ENCODE measurements at regions of chr9 and their contacts with region 1.

Region 1: DNA sequence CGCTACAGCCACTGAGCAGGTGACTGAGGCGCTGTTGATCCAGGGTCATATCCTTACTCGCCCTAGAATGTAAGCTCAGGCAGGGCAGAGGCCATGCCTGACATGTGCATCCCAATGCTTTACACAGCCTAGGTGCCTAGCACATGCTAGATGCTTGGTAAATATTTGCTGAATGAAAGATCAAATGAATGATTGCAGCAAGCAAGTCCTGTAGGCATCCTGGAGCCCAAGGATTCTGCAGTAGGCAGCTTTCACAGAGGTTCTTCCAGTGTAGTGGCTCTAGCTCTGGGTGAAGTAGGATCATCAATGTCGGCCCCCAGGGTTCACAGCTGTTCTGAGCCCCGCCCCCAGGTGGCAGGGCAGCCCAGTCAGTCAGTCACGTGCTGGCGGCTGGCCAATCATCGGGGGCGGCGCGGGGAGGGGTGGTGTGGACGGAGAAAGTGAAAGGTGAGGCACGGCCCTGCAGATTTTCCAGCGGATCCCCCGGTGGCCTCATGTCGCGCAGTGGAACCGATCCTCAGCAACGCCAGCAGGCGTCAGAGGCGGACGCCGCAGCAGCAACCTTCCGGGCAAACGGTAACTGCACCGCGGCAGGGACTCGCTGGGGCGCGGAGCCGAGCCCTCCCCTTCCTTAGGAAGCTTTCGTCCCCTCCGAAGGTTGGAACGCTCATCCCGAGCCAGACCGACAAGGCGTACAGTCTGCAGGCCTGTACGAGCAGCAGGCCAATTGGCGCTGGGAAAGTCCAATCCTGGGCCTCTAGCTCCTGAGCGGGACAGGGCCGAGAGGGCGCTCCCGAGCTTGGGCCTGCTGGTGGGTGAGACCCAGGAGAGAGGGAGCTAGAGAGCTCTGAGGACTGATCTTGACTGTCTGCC is at the start of gene GALT:
- DNase-seq: peak; percentile 92 to 96 (median 94)
- H3K4me3 ChIP-seq: peak within 1 kb of the TSS; percentile 83 to 87
- H3K4me3 Mint-ChIP-seq: peak within 1 kb of the TSS; percentile 93 to 97 (median 95)
- H3K27ac ChIP-seq: peak within 1 kb of the TSS; percentile 84
- H3K27ac Mint-ChIP-seq: peak within 1 kb of the TSS; percentile 89 to 96 (median 93)
- H3K4me1 ChIP-seq: peaks cover 28% of the 10 kb centered on the region
- H3K4me1 Mint-ChIP-seq: peaks cover 23 to 49% (median 31%) of the 10 kb centered on the region in 4 donors
- H3K27me3 ChIP-seq: no peaks in the 10 kb centered on the region
- H3K27me3 Mint-ChIP-seq: no peaks in the 10 kb centered on the region
- total RNA-seq, gene GALT: 251 to 261 TPM

Region 2: GRCh38 chr9:34611829-34612630 is 34.4 kb before region 1 on chr9 and contains the start of gene RPP25L:
- CTCF ChIA-PET with region 1: interaction called, 7 read pairs
- POLR2A ChIA-PET with region 1: interaction called, 22 read pairs
- intact Hi-C with region 1: loop called (anchors 5 kb)
- DNase-seq: peak; percentile 83 to 89 (median 86)
- H3K4me3 ChIP-seq: peak within 1 kb of the TSS; percentile 81 to 88
- H3K4me3 Mint-ChIP-seq: peak within 1 kb of the TSS; percentile 87 to 99 (median 92)
- H3K27ac ChIP-seq: peak within 1 kb of the TSS; percentile 71
- H3K27ac Mint-ChIP-seq: peak within 1 kb of the TSS; percentile 83 to 97 (median 96)
- H3K4me1 ChIP-seq: peaks cover 19% of the 10 kb centered on the region
- H3K4me1 Mint-ChIP-seq: peaks cover 7 to 35% (median 25%) of the 10 kb centered on the region in 4 donors
- H3K27me3 ChIP-seq: no peaks in the 10 kb centered on the region
- H3K27me3 Mint-ChIP-seq: no peaks in the 10 kb centered on the region
- total RNA-seq, gene RPP25L: 28.5 to 28.9 TPM

Region 3: GRCh38 chr9:34620061-34620994 is 26.1 kb before region 1 on chr9 and contains the start of gene DCTN3:
- CTCF ChIA-PET with region 1: interaction called, 10 read pairs
- POLR2A ChIA-PET with region 1: interaction called, 18 read pairs
- intact Hi-C with region 1: no loop called
- DNase-seq: peak; percentile 89 to 97 (median 93)
- H3K4me3 ChIP-seq: peak within 1 kb of the TSS; percentile 71 to 90
- H3K4me3 Mint-ChIP-seq: peak within 1 kb of the TSS; percentile 93 to 98 (median 96)
- H3K27ac ChIP-seq: peak within 1 kb of the TSS; percentile 69
- H3K27ac Mint-ChIP-seq: peak within 1 kb of the TSS; percentile 82 to 98 (median 95)
- H3K4me1 ChIP-seq: peaks cover 27% of the 10 kb centered on the region
- H3K4me1 Mint-ChIP-seq: peaks cover 17 to 41% (median 29%) of the 10 kb centered on the region in 4 donors
- H3K27me3 ChIP-seq: peaks cover 29% of the 10 kb centered on the region
- H3K27me3 Mint-ChIP-seq: peaks cover 19 to 26% of the 10 kb centered on the region in 2 donors
- total RNA-seq, gene DCTN3: 57.8 to 62.0 TPM

Region 4: GRCh38 chr9:34665381-34666250 is 19.2 kb after region 1 on chr9:
- CTCF ChIA-PET with region 1: interaction called, 168 read pairs
- POLR2A ChIA-PET with region 1: interaction called, 484 read pairs
- intact Hi-C with region 1: loop called (anchors 1 kb)
- DNase-seq: peak; percentile 87 to 94 (median 89)
- H3K4me3 ChIP-seq: peak overlapping the region; percentile 75 to 95
- H3K4me3 Mint-ChIP-seq: peak overlapping the region; percentile 85 to 97 (median 93)
- H3K27ac ChIP-seq: peak overlapping the region; percentile 98
- H3K27ac Mint-ChIP-seq: peak overlapping the region; percentile 95 to 99 (median 99)
- H3K4me1 ChIP-seq: peaks cover 59% of the 10 kb centered on the region
- H3K4me1 Mint-ChIP-seq: peaks cover 41 to 65% (median 53%) of the 10 kb centered on the region in 4 donors
- H3K27me3 ChIP-seq: no peaks in the 10 kb centered on the region
- H3K27me3 Mint-ChIP-seq: no peaks in the 10 kb centered on the region